ENCODE measurements at regions of chr15 and their contacts with region 1.

Region 1: GRCh38 chr15:40323239-40323952 is at the start of gene INAFM2:
- DNase-seq: peak; percentile 83
- H3K4me3 Mint-ChIP-seq: peak within 1 kb of the TSS; percentile 83
- H3K27ac Mint-ChIP-seq: no peak within 1 kb of the TSS
- H3K4me1 Mint-ChIP-seq: peaks cover 52% of the 10 kb centered on the region
- H3K27me3 Mint-ChIP-seq: peaks cover 15% of the 10 kb centered on the region
- total RNA-seq, gene INAFM2: 19.2 and 25.1 TPM in 2 replicates

Region 2: GRCh38 chr15:39919748-39920509 is 403.5 kb before region 1 on chr15 and contains the start of gene GPR176:
- intact Hi-C with region 1: no loop called
- DNase-seq: no peak
- H3K4me3 Mint-ChIP-seq: peak within 1 kb of the TSS; percentile 89
- H3K27ac Mint-ChIP-seq: peak within 1 kb of the TSS; percentile 59
- H3K4me1 Mint-ChIP-seq: peaks cover 27% of the 10 kb centered on the region
- H3K27me3 Mint-ChIP-seq: peaks cover 35% of the 10 kb centered on the region
- total RNA-seq, gene GPR176: 0.23 and 0.34 TPM in 2 replicates

Region 3: GRCh38 chr15:40160689-40161688 is 162.4 kb before region 1 on chr15 and contains the start of gene BUB1B:
- intact Hi-C with region 1: loop called (anchors 1 kb)
- DNase-seq: peak; percentile 93
- H3K4me3 Mint-ChIP-seq: no peak within 1 kb of the TSS
- H3K27ac Mint-ChIP-seq: no peak within 1 kb of the TSS
- H3K4me1 Mint-ChIP-seq: peaks cover 10% of the 10 kb centered on the region
- H3K27me3 Mint-ChIP-seq: no peaks in the 10 kb centered on the region
- total RNA-seq, gene BUB1B: 71.0 and 76.1 TPM in 2 replicates

Region 4: DNA sequence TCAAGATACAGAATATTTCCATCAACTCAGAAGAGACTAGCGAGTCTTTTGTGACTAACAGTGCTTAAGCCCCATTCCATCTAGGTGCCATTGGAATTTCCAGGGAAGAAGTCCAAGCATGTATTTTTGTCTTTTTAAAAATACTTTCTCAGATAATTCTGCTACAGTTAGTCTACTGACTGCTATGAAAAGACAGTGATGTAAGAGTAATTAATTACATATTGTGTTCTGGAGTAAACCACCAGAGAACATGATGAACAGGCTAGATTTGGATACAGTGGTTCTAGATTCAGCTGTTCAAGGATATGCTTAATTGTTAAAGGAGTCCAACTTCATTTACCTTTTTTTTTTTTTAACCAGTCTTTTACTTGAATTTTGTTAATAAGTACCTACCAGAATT is 119.3 kb before region 1 on chr15:
- intact Hi-C with region 1: no loop called
- DNase-seq: no peak
- H3K4me3 Mint-ChIP-seq: no peak overlapping the region
- H3K27ac Mint-ChIP-seq: no peak overlapping the region
- H3K4me1 Mint-ChIP-seq: peaks cover 3% of the 10 kb centered on the region
- H3K27me3 Mint-ChIP-seq: no peaks in the 10 kb centered on the region

Region 5: GRCh38 chr15:40307421-40308211 is 15.8 kb before region 1 on chr15 and contains the start of gene PLCB2:
- intact Hi-C with region 1: loop called (anchors 1 kb)
- DNase-seq: peak; percentile 62
- H3K4me3 Mint-ChIP-seq: peak within 1 kb of the TSS; percentile 92
- H3K27ac Mint-ChIP-seq: peak within 1 kb of the TSS; percentile 98
- H3K4me1 Mint-ChIP-seq: peaks cover 37% of the 10 kb centered on the region
- H3K27me3 Mint-ChIP-seq: peaks cover 16% of the 10 kb centered on the region
- total RNA-seq, gene PLCB2: 88.5 and 89.0 TPM in 2 replicates

Region 6: GRCh38 chr15:40338041-40338657 is 14.8 kb after region 1 on chr15:
- intact Hi-C with region 1: loop called (anchors 1 kb)
- DNase-seq: peak; percentile 70
- H3K4me3 Mint-ChIP-seq: no peak overlapping the region
- H3K27ac Mint-ChIP-seq: no peak overlapping the region
- H3K4me1 Mint-ChIP-seq: peaks cover 18% of the 10 kb centered on the region
- H3K27me3 Mint-ChIP-seq: peaks cover 2% of the 10 kb centered on the region

Region 7: DNA sequence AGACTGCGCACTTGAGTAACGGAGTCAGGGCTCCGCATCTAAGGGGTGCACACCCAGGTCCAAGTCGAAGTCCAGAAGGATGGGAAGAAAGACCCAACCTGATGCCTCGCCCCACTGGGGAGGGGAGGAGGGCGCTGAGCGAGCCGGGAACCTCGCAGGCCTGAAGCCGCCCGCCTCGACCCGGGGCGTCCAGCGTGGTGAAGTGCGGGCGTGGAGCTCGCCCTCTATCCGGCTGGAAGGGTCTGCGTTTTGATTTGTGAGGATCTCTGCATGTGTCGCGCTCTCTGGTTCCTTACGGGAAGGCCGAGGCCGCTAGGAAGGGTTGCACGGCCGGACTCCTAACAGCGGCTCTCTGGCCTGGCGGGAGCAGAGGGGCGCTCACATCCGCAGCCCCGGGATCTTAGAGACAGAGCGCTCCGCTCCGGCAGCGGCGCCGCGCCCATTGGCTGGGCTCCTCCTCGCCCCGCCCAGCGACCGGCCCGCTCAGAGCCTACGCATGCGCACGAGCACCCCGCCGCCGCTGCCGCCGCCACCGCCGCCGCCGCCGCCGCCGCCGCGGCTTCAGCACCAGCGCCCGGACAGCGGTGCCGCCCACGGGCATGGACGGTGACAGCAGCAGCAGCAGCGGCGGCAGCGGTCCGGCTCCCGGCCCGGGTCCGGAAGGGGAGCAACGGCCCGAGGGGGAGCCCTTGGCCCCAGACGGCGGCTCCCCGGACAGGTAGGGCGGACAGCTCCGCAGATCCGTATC is 34.5 kb after region 1 on chr15 and contains the start of gene DISP2:
- intact Hi-C with region 1: loop called (anchors 1 kb)
- DNase-seq: peak; percentile 82
- H3K4me3 Mint-ChIP-seq: peak within 1 kb of the TSS; percentile 80
- H3K27ac Mint-ChIP-seq: peak within 1 kb of the TSS; percentile 6
- H3K4me1 Mint-ChIP-seq: no peaks in the 10 kb centered on the region
- H3K27me3 Mint-ChIP-seq: peaks cover 29% of the 10 kb centered on the region
- total RNA-seq, gene DISP2: 0.02 and 0.54 TPM in 2 replicates

Region 8: DNA sequence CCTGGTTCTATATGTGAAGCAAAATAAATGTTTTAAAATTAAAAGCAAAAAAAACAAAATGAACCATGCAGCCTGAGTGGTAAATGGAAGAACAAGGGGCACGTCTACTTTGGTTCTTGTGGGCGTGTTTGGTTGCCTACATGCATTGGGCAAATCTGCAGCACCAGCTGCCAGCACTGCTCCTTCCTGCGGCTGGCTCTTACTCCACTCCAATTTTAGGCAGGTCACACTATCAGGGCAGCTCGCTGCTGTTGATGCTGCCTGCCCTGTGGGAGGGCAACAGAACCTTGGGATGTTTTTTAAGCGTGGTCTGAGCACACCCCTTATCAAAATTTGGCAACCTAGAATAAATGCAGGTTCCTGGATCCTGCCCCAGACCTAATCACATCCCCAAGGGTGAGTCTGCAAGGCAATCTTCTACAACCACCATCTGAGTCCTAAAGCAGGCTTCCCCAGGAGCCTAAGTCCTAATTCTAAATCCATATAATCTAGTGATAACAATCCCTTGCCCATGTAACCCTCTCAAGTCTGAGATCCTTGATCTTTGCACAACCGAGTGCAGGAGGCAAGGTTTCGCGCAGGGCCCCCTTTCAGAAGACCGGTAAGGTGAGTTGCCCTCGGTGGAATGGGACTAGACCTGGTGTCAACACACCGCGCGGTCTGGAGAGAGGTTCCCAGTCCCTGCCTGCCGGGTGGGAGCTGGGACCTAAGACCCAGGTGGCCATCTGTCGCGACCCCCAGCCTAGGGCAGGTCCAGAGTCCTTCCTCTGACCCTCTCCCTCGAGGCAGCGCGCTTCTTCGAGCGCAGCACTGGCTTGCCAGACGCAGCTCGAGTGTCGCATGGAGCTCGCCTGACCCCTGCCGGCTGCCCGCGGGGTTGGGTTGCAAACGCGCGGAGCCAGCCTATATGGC is 98.1 kb after region 1 on chr15:
- intact Hi-C with region 1: loop called (anchors 1 kb)
- DNase-seq: peak; percentile 72
- H3K4me3 Mint-ChIP-seq: no peak overlapping the region
- H3K27ac Mint-ChIP-seq: no peak overlapping the region
- H3K4me1 Mint-ChIP-seq: no peaks in the 10 kb centered on the region
- H3K27me3 Mint-ChIP-seq: no peaks in the 10 kb centered on the region

Region 9: DNA sequence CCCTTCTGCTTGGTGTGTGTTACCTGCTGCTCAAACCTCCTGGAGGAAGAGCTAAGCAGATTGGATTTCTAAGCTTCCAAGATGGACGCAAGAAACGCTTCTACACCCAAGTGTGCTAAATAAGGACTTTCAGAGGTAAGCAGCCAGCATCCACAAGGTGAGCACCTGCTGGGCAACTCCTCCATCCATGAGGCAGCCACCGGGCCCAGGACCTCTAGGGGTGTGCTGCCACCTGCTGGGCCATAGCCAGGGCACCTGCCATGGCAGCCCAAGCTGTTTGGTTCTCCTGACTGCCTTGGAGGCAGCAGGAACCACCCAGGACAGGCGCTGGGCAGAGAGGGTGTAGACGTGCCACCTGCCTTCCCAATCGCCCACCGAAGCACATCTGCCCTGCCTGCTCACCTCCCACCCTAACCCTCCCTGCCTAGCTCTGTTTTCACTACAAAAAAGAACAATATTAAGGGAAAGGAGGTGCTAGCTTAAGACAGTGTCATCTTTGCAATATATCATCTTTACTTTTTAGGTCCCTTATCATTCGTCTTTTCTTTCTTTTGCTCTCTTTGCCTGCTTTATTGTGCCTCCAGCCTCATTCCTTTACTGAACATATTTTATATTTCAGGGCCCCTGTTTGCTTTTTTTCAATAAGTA is 459.3 kb after region 1 on chr15:
- intact Hi-C with region 1: no loop called
- DNase-seq: peak; percentile 74
- H3K4me3 Mint-ChIP-seq: no peak overlapping the region
- H3K27ac Mint-ChIP-seq: no peak overlapping the region
- H3K4me1 Mint-ChIP-seq: peaks cover 21% of the 10 kb centered on the region
- H3K27me3 Mint-ChIP-seq: no peaks in the 10 kb centered on the region

Measured in activated T-helper 1 cell treated with anti-CD3 and anti-CD28 coated beads, Interleukin-12 subunit alpha, Interleukin-12 subunit beta, Interleukin-2, Interleukin-4 antibody, amounts not matched to agents 30 ng/mL and 10 ng/mL and 1 ng/mL, durations not matched to agents 14 hours and 24 hours and 36 hours (primary cell).